ENCODE measurements at regions of chr2 and their contacts with region 1.

Region 1: GRCh38 chr2:227460070-227460485 is 11.9 kb upstream of the AGFG1 start:
- DNase-seq: peak; percentile 45
- H3K4me3 Mint-ChIP-seq: peak overlapping the region; percentile 27
- H3K27ac Mint-ChIP-seq: peak overlapping the region; percentile 88
- H3K4me1 Mint-ChIP-seq: peaks cover 61% of the 10 kb centered on the region
- H3K27me3 Mint-ChIP-seq: no peaks in the 10 kb centered on the region

Region 2: GRCh38 chr2:226835796-226836547 is 624.1 kb before region 1 on chr2 and contains the start of gene RHBDD1:
- intact Hi-C with region 1: loop called (anchors 5 kb)
- DNase-seq: peak; percentile 92
- H3K4me3 Mint-ChIP-seq: peak within 1 kb of the TSS; percentile 92
- H3K27ac Mint-ChIP-seq: peak within 1 kb of the TSS; percentile 98
- H3K4me1 Mint-ChIP-seq: peaks cover 50% of the 10 kb centered on the region
- H3K27me3 Mint-ChIP-seq: no peaks in the 10 kb centered on the region
- total RNA-seq, gene RHBDD1: 40.9 and 42.2 TPM in 2 replicates

Region 3: GRCh38 chr2:227370791-227371312 is 89.2 kb before region 1 on chr2:
- intact Hi-C with region 1: loop called (anchors 2 kb)
- DNase-seq: no peak
- H3K4me3 Mint-ChIP-seq: no peak overlapping the region
- H3K27ac Mint-ChIP-seq: no peak overlapping the region
- H3K4me1 Mint-ChIP-seq: peaks cover 6% of the 10 kb centered on the region
- H3K27me3 Mint-ChIP-seq: no peaks in the 10 kb centered on the region

Region 4: GRCh38 chr2:227423656-227424499 is 36.2 kb before region 1 on chr2:
- intact Hi-C with region 1: loop called (anchors 2 kb)
- DNase-seq: no peak
- H3K4me3 Mint-ChIP-seq: no peak overlapping the region
- H3K27ac Mint-ChIP-seq: no peak overlapping the region
- H3K4me1 Mint-ChIP-seq: peaks cover 4% of the 10 kb centered on the region
- H3K27me3 Mint-ChIP-seq: no peaks in the 10 kb centered on the region

Region 5: DNA sequence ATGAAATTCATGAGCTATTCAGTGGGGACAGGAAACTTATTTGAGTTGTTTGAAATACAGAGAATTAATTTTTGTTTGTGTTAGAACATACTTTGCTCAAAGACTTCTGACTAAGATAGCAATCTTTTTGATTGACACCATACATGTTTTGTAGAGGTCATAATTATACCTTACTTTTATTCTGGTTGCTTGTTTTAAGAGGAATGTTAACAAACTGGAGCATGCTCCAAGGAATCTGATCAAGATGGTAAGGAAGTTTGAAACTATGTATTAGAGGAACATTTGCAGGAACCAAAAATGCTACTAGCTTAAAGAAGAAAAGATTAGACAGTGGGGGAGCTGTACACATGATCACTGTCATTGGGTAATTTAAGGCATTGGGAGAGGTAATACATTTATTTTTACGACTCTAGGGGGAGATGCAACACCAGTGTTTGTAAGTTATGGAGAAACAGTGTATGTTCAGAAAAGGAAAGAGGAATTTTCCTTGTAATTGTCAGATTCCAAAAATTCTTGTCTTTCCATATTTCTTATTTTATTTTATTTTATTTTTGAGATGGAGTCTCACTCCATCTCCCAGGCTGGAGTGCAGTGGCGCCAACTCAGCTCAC is 19.9 kb after region 1 on chr2:
- intact Hi-C with region 1: loop called (anchors 2 kb)
- DNase-seq: no peak
- H3K4me3 Mint-ChIP-seq: peak overlapping the region; percentile 41
- H3K27ac Mint-ChIP-seq: peak overlapping the region; percentile 56
- H3K4me1 Mint-ChIP-seq: peaks cover 42% of the 10 kb centered on the region
- H3K27me3 Mint-ChIP-seq: no peaks in the 10 kb centered on the region

Region 6: GRCh38 chr2:227503433-227504406 is 43.6 kb after region 1 on chr2:
- intact Hi-C with region 1: no loop called
- DNase-seq: no peak
- H3K4me3 Mint-ChIP-seq: no peak overlapping the region
- H3K27ac Mint-ChIP-seq: no peak overlapping the region
- H3K4me1 Mint-ChIP-seq: peaks cover 31% of the 10 kb centered on the region
- H3K27me3 Mint-ChIP-seq: no peaks in the 10 kb centered on the region

Region 7: DNA sequence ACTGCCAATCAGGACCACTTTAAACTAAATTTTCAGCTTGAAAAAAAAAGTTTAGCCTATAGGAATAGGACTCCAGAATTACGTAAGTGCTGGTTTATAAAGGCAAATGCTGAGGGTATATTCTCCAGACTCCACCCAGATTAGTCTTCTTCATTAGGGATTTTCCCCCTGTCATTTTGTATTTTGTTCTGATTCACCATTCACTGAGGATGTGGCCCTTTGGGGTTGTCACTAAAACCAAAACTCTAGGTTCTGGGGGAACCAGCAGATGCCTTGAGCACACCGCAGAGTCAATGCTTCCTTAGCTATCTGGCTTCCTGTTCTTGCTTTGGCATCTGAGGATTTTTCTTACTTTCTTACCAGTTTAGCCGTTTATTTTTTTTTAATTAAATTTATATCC is 167.7 kb after region 1 on chr2:
- intact Hi-C with region 1: no loop called
- DNase-seq: no peak
- H3K4me3 Mint-ChIP-seq: no peak overlapping the region
- H3K27ac Mint-ChIP-seq: no peak overlapping the region
- H3K4me1 Mint-ChIP-seq: no peaks in the 10 kb centered on the region
- H3K27me3 Mint-ChIP-seq: peaks cover 15% of the 10 kb centered on the region